ENCODE measurements at regions of chr12 and their contacts with region 1.

Region 1: GRCh38 chr12:38324896-38325295 is 8.3 kb downstream of the ALG10B start:
- DNase-seq: no peak
- ATAC-seq: no peak
- H3K4me3 ChIP-seq: no peak overlapping the region
- H3K27ac ChIP-seq: no peak overlapping the region
- H3K4me1 ChIP-seq: no peaks in the 10 kb centered on the region
- H3K27me3 ChIP-seq: no peaks in the 10 kb centered on the region
- CTCF ChIP-seq: no peak
- POLR2A ChIP-seq: no peak

Region 2: DNA sequence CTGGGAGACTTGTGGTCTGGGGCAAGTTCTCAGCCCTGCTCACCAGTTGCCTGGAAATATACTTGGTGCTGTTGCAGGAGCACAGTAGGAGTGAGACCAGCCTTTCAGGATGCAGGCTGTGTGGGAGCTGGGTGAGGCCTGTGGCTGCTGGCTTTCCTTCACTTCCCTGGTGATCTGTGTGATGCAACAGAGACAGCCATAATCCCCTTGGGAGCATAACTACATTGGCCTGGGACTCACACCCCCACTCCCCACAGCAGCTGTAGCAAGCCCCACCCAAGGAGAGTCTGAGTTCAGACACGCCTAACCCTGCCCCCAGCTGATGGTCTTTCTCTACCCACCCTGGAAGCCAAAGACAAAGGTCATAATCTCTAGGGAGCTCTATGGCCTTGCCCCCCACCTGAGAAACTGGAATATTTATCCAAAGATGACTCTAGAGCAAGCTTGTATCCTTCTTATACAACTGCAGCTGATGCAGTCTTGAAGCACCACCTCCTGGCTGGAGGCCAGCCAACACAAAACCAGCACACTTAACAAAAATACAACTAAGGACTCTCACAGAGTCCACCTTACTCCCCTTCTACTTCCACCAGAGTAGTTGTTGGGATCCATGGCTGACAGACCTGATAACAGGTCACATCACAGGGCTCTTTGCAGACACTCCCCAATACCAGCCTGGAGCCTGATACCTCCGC is 770.9 kb after region 1 on chr12:
- intact Hi-C with region 1: loop called in 8 of 10 experiments (anchors 5 to 10 kb)
- DNase-seq: no peak
- ATAC-seq: no peak
- H3K4me3 ChIP-seq: no peak overlapping the region
- H3K27ac ChIP-seq: no peak overlapping the region
- H3K4me1 ChIP-seq: no peaks in the 10 kb centered on the region
- H3K27me3 ChIP-seq: peaks cover 0 to 18% (median 0%) of the 10 kb centered on the region in 9 donors
- CTCF ChIP-seq: no peak
- POLR2A ChIP-seq: no peak

Measured in heart left ventricle (tissue), 16 donors.